ENCODE measurements at regions of chr13 and their contacts with region 1.

Region 1: GRCh38 chr13:49996951-49997895 is at the start of gene TRIM13:
- DNase-seq: peak; percentile 90
- ATAC-seq: peak; percentile 86
- H3K4me3 Mint-ChIP-seq: peak within 1 kb of the TSS; percentile 77
- H3K27ac Mint-ChIP-seq: peak within 1 kb of the TSS; percentile 76
- H3K4me1 Mint-ChIP-seq: peaks cover 47% of the 10 kb centered on the region
- H3K27me3 Mint-ChIP-seq: no peaks in the 10 kb centered on the region
- total RNA-seq, gene TRIM13: 10.6 to 12.9 TPM

Region 2: GRCh38 chr13:49792550-49793324 is 204.5 kb before region 1 on chr13 and contains the start of gene KPNA3:
- CTCF ChIA-PET with region 1: interaction called, 3 read pairs
- POLR2A ChIA-PET with region 1: interaction called, 9 read pairs
- intact Hi-C with region 1: loop called in 1 of 2 experiments (anchors 1 kb)
- DNase-seq: peak; percentile 98
- ATAC-seq: peak; percentile 93
- H3K4me3 Mint-ChIP-seq: peak within 1 kb of the TSS; percentile 89
- H3K27ac Mint-ChIP-seq: peak within 1 kb of the TSS; percentile 88
- H3K4me1 Mint-ChIP-seq: peaks cover 30% of the 10 kb centered on the region
- H3K27me3 Mint-ChIP-seq: peaks cover 4% of the 10 kb centered on the region
- total RNA-seq, gene KPNA3: 51.7 to 58.0 TPM

Region 3: GRCh38 chr13:50015258-50015657 is 18.0 kb after region 1 on chr13 and contains the start of gene KCNRG:
- CTCF ChIA-PET with region 1: interaction called, 13 read pairs
- POLR2A ChIA-PET with region 1: interaction called, 4 read pairs
- intact Hi-C with region 1: no loop called
- DNase-seq: no peak
- ATAC-seq: no peak
- H3K4me3 Mint-ChIP-seq: no peak within 1 kb of the TSS
- H3K27ac Mint-ChIP-seq: no peak within 1 kb of the TSS
- H3K4me1 Mint-ChIP-seq: peaks cover 39% of the 10 kb centered on the region
- H3K27me3 Mint-ChIP-seq: no peaks in the 10 kb centered on the region
- total RNA-seq, gene KCNRG: 0.11 to 0.12 TPM

Region 4: DNA sequence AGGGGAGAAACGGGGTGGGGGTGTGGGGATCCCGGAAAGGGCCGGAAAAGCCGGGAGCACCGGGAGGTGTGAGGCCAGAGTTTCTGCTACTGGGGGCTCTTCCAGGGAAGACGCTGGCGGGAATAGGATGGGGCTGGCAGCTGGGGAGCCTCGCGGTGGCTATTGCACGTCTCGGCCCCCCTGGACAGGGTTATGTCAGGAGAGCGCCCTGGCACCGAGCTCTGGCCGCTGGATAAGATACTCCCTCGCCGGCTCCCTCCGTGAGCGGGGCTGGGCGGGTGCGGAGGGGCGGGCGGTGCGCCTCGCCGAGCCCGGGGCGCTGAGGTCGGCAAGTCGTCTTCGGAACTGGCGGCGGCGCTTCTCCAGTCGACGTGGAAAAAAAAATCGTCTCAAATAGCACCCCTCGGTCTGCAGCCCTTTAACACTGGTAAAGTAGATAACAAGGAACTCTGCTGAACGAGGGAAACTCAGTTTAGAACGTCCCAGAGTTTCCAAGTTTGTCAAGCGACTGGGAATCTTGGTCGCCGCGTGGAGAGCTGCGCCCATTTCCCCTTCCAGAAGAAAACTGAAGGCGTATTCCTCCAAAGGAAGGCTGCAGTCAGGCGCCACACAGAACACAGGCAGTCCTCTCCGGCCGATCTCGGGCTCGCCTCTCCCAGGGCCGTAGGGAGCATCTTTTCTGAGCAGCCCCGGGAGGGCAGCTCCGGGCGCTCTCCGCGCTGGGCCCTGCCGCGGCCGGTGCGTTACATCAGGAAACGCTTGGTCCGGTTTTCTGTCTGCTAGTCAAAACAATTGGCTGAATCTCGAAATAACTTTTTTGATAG is 133.1 kb after region 1 on chr13:
- CTCF ChIA-PET with region 1: interaction called, 12 read pairs
- POLR2A ChIA-PET with region 1: interaction called, 12 read pairs
- intact Hi-C with region 1: loop called in 1 of 2 experiments (anchors 2 kb)
- DNase-seq: peak; percentile 52
- ATAC-seq: no peak
- H3K4me3 Mint-ChIP-seq: peak overlapping the region; percentile 67
- H3K27ac Mint-ChIP-seq: no peak overlapping the region
- H3K4me1 Mint-ChIP-seq: peaks cover 60% of the 10 kb centered on the region
- H3K27me3 Mint-ChIP-seq: peaks cover 63% of the 10 kb centered on the region

Region 5: GRCh38 chr13:50365408-50366391 is 368.5 kb after region 1 on chr13:
- CTCF ChIA-PET with region 1: no interaction called
- POLR2A ChIA-PET with region 1: no interaction called
- intact Hi-C with region 1: loop called (anchors 5 kb)
- DNase-seq: peak; percentile 75
- ATAC-seq: peak; percentile 64
- H3K4me3 Mint-ChIP-seq: peak overlapping the region; percentile 13
- H3K27ac Mint-ChIP-seq: peak overlapping the region; percentile 71
- H3K4me1 Mint-ChIP-seq: peaks cover 43% of the 10 kb centered on the region
- H3K27me3 Mint-ChIP-seq: peaks cover 32% of the 10 kb centered on the region

Region 6: DNA sequence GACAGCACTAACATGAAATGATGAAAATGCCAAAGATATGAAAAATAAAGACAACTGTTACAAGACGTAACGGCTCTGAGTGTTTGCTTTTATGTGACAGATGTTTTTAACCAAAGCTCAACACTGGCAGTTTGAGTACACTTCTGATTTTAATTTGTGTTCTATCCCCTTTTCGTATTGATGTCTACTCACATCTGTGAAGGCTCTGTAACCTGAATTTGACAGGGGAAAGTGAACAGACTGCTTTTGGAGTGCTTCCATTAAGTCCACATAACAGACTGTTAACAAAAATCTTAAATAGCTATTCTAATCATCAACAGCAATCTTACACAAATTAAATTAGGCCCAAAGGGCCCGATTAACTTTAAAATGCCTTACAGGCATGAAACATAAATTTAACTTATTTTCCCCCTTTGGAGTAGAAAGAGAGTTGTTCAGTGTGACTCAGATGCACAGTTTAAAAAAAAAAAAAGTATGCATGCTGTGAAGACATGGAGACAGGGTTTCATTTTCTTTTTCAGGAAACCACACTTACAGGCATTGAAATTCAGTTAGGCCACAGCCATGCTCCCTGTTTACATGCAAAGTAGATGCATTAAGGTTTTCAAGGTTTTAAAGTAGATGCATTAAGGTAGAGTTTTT is 896.1 kb after region 1 on chr13:
- CTCF ChIA-PET with region 1: interaction called, 4 read pairs
- POLR2A ChIA-PET with region 1: no interaction called
- intact Hi-C with region 1: loop called in 1 of 2 experiments (anchors 2 kb)
- DNase-seq: peak; percentile 37
- ATAC-seq: peak; percentile 94
- H3K4me3 Mint-ChIP-seq: peak overlapping the region; percentile 50
- H3K27ac Mint-ChIP-seq: peak overlapping the region; percentile 89
- H3K4me1 Mint-ChIP-seq: peaks cover 40% of the 10 kb centered on the region
- H3K27me3 Mint-ChIP-seq: no peaks in the 10 kb centered on the region

Measured in activated CD4-positive, alpha-beta T cell treated with anti-CD3 and anti-CD28 coated beads for 36 hours (primary cell).